HEK293 (cell line): ENCODE measurements at regions of chr22 and their contacts with region 1.

Region 1: GRCh38 chr22:50250555-50251476 is at the start of gene HDAC10:
- H3K4me3 ChIP-seq: peak within 1 kb of the TSS; percentile 55
- H3K27ac ChIP-seq: peak within 1 kb of the TSS; percentile 86
- H3K4me1 ChIP-seq: peaks cover 12% of the 10 kb centered on the region
- CTCF ChIP-seq: no peak

Region 2: DNA sequence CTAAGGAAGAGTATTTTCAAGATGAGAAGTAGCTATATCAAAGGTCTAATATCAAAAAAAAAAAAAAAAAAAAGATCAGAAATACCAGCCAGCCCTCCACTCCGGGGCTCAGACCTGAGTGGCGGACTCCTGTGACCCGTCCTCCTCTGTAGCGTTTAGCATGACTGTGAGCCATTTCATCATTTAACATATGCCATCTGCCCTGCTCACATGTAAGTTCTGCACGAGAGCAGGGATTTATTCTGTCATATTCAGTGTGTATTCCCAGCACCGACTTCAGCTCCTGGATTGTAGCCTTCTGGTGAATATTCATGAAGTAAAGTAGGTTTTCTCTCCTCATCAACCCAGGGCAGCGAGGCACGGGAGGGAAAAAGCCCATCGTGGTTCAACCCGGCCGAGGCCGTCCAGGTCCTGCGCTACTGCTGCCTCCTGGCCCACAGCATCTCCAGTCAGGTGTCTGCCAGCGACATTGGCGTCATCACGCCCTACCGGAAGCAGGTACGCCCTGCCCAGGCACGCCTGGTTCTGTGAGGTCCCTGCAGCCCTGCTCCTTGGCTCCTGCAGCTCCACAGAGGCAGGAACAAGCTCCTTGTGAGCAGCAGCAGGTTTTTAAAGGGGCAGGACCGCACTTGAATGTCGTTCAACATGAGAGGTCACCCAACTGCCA is 93.0 kb before region 1 on chr22:
- CTCF ChIA-PET with region 1: no interaction called
- POLR2A ChIA-PET with region 1: no interaction called
- H3K4me3 ChIP-seq: no peak overlapping the region
- H3K27ac ChIP-seq: no peak overlapping the region
- H3K4me1 ChIP-seq: no peaks in the 10 kb centered on the region
- CTCF ChIP-seq: no peak

Region 3: DNA sequence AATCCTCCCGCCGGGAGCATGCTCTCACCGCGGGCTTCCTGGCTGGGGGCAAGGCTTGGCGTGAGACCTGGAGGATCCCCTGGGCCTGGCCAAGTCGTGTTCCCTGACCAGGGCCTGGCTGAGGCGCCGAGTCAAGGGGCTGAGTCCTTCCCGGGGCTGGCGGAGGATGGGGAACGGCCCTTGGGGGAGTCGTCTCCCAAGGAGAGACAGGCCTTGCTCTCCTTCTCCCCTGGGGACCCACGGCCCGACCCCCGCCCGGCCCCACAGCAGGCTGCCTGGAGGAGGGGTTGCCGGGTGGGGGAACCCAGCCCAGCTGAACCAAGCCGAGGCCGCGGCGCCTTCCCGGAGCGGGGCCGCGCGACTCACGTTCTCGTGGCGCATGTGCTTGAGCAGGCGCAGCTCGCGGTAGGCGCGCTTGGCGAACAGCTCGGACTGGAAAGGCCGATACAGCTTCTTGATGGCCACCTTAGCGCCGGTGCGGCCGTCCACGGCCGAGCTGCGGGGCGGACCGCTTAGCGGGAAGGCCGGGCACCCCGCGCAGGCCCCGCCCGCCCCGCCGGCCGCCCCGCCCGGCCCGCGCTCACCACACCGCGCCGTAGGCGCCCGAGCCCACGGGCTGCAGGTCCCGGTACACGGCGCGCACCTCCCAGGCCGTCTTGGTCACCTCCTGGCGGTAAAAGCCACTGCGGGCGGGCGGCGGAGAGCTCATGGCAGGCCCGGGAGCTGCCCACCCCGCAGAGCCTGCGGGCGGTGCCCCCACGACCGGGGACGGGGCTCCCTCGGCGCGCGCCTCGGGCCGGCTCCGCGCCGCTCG is 10.2 kb after region 1 on chr22:
- CTCF ChIA-PET with region 1: interaction called, 5 read pairs
- POLR2A ChIA-PET with region 1: interaction called, 20 read pairs
- H3K4me3 ChIP-seq: peak overlapping the region; percentile 59
- H3K27ac ChIP-seq: peak overlapping the region; percentile 87; the same call in 1 of the 2 replicates
- H3K4me1 ChIP-seq: peaks cover 11% of the 10 kb centered on the region
- CTCF ChIP-seq: no peak

Region 4: GRCh38 chr22:50306753-50307749 is 56.2 kb after region 1 on chr22 and contains the start of gene PLXNB2:
- CTCF ChIA-PET with region 1: interaction called, 5 read pairs
- POLR2A ChIA-PET with region 1: interaction called, 15 read pairs
- H3K4me3 ChIP-seq: peak within 1 kb of the TSS; percentile 89
- H3K27ac ChIP-seq: peak within 1 kb of the TSS; percentile 98
- H3K4me1 ChIP-seq: peaks cover 21% of the 10 kb centered on the region
- CTCF ChIP-seq: no peak

Region 5: GRCh38 chr22:50326959-50327710 is 76.3 kb after region 1 on chr22 and contains the start of gene DENND6B:
- CTCF ChIA-PET with region 1: interaction called, 12 read pairs
- POLR2A ChIA-PET with region 1: interaction called, 7 read pairs
- H3K4me3 ChIP-seq: peak within 1 kb of the TSS; percentile 66
- H3K27ac ChIP-seq: peak within 1 kb of the TSS; percentile 85
- H3K4me1 ChIP-seq: no peaks in the 10 kb centered on the region
- CTCF ChIP-seq: no peak

Region 6: DNA sequence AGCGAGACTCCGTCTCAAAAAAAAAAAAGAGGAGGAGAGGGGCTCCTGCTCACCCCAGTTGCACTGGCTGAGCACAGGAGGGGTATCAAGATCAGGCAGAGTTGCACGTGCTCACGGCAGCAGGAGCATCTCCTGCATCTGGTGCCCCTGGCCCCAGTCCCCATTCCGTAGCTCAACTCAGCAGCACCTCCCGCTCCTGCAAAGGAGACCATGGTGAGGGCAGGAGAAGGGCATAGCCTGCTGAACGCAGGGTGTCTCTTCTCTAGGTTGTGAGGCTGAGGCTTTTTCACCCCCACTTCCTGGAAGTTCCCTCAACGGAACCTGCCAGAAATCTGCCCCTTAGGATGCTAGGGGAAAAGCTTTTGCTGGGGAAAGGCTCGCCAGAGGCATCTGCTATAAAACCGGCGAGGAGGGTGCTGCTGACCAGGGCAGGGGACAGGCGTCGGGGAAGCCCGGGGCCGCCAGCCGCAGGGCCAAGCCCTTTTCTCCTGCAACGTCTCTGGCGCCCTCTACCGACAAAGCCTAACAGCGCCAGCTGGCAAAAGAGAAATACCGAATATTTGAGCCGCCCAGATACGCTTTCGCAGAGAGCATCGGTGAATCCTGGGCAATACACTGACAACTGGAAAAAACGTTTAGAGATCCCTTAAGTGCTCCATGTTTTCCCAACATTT is 91.3 kb after region 1 on chr22:
- CTCF ChIA-PET with region 1: interaction called, 24 read pairs
- POLR2A ChIA-PET with region 1: interaction called, 6 read pairs
- H3K4me3 ChIP-seq: peak overlapping the region; percentile 33
- H3K27ac ChIP-seq: peak overlapping the region; percentile 95
- H3K4me1 ChIP-seq: no peaks in the 10 kb centered on the region
- CTCF ChIP-seq: peak; percentile 97